MCF 10A (cell line): ENCODE measurements at regions of chrX and their contacts with region 1.

Region 1: DNA sequence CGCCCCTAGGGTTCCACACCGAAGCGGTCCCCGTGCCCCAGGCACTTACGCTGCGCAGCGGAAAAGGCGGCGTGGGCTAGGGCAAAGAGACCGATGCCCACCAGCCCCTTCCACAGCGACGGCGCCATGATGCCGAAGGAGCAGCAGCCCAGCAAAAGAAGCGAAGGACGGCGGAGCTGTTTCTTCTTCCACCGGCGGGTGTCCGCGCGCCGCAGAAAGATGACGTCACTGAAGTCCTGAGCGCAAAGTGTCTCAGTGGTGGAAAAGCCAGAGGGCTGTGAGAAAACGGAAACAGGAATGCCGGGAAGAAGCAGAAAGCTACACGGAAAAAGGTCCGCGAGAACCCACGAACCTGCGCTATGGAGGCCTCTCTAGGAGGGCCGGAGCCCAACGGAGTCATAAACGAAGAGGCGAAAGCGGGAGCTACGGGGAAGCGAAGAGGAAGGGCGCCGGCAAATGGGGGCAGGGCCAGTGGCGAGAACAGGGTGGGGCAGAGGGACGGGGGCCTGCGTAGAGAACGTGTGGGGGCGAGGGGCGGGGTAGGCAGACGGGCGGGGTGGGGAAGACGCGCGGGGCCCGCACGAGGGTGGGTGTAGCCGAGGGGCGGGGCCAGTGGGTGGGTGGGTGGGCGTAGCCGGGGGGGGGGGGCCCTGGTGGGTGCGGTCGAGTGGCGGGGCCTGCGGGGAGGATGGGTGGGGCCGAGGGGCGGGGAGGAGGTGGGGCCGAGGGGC is at the start of gene MMGT1:
- DNase-seq: peak; percentile 75
- H3K4me3 Mint-ChIP-seq: peak within 1 kb of the TSS; percentile 98
- H3K27ac Mint-ChIP-seq: peak within 1 kb of the TSS; percentile 99
- H3K4me1 Mint-ChIP-seq: peaks cover 7% of the 10 kb centered on the region
- H3K27me3 Mint-ChIP-seq: peaks cover 53% of the 10 kb centered on the region
- CTCF ChIP-seq: no peak
- total RNA-seq, gene MMGT1: 24.1 and 27.7 TPM in 2 replicates

Region 2: GRCh38 chrX:134898440-134898839 is 1075.3 kb before region 1 on chrX:
- CTCF ChIA-PET with region 1: no interaction called
- POLR2A ChIA-PET with region 1: no interaction called
- intact Hi-C with region 1: no loop called
- DNase-seq: no peak
- H3K4me3 Mint-ChIP-seq: no peak overlapping the region
- H3K27ac Mint-ChIP-seq: no peak overlapping the region
- H3K4me1 Mint-ChIP-seq: no peaks in the 10 kb centered on the region
- H3K27me3 Mint-ChIP-seq: no peaks in the 10 kb centered on the region
- CTCF ChIP-seq: no peak

Region 3: GRCh38 chrX:135893294-135893817 is 80.4 kb before region 1 on chrX and contains the starts of genes CT45A10 and SAGE1:
- CTCF ChIA-PET with region 1: no interaction called
- POLR2A ChIA-PET with region 1: no interaction called
- intact Hi-C with region 1: no loop called
- DNase-seq: no peak
- H3K4me3 Mint-ChIP-seq: no peak within 1 kb of the TSS
- H3K27ac Mint-ChIP-seq: no peak within 1 kb of the TSS
- H3K4me1 Mint-ChIP-seq: no peaks in the 10 kb centered on the region
- H3K27me3 Mint-ChIP-seq: peaks cover 3% of the 10 kb centered on the region
- CTCF ChIP-seq: no peak
- total RNA-seq, gene CT45A10: not detected in 2 replicates
- total RNA-seq, gene SAGE1: not detected in 2 replicates

Region 4: GRCh38 chrX:135985141-135985972 is 11.6 kb after region 1 on chrX and contains the start of gene SLC9A6:
- CTCF ChIA-PET with region 1: no interaction called
- POLR2A ChIA-PET with region 1: interaction called, 35 read pairs
- intact Hi-C with region 1: no loop called
- DNase-seq: peak; percentile 48
- H3K4me3 Mint-ChIP-seq: peak within 1 kb of the TSS; percentile 83
- H3K27ac Mint-ChIP-seq: peak within 1 kb of the TSS; percentile 17
- H3K4me1 Mint-ChIP-seq: peaks cover 6% of the 10 kb centered on the region
- H3K27me3 Mint-ChIP-seq: peaks cover 27% of the 10 kb centered on the region
- CTCF ChIP-seq: no peak
- total RNA-seq, gene SLC9A6: 8.1 and 10.7 TPM in 2 replicates